Kidney (tissue), 22 donors: ENCODE measurements at regions of chr9 and their contacts with region 1.

Region 1: GRCh38 chr9:32378993-32379729 is 5.3 kb upstream of the ACO1 start:
- DNase-seq: peak in 3 of 5 donors; percentile 59 to 95 (median 88)
- H3K4me3 ChIP-seq: no peak overlapping the region
- H3K27ac ChIP-seq: no peak overlapping the region
- H3K4me1 ChIP-seq: peaks cover 0 to 3% (median 2%) of the 10 kb centered on the region in 3 donors
- H3K27me3 ChIP-seq: peaks cover 9% of the 10 kb centered on the region
- CTCF ChIP-seq: peak; percentile 89

Region 2: GRCh38 chr9:31848505-31849285 is 530.5 kb before region 1 on chr9:
- intact Hi-C with region 1: no loop called
- DNase-seq: peak in 1 of 5 donors; percentile 27
- H3K4me3 ChIP-seq: no peak overlapping the region
- H3K27ac ChIP-seq: no peak overlapping the region
- H3K4me1 ChIP-seq: no peaks in the 10 kb centered on the region
- H3K27me3 ChIP-seq: no peaks in the 10 kb centered on the region
- CTCF ChIP-seq: no peak

Region 3: GRCh38 chr9:32579706-32580331 is 200.7 kb after region 1 on chr9:
- intact Hi-C with region 1: loop called (anchors 5 kb)
- DNase-seq: peak; percentile 56 to 79 (median 64)
- H3K4me3 ChIP-seq: no peak overlapping the region
- H3K27ac ChIP-seq: no peak overlapping the region
- H3K4me1 ChIP-seq: peaks cover 0 to 2% (median 0%) of the 10 kb centered on the region in 3 donors
- H3K27me3 ChIP-seq: no peaks in the 10 kb centered on the region
- CTCF ChIP-seq: peak; percentile 93